Ovary (tissue), 10 donors: ENCODE measurements at regions of chr6 and their contacts with region 1.

Region 1: GRCh38 chr6:91268941-91269340 is 682.1 kb upstream of the MAP3K7 start:
- DNase-seq: no peak
- H3K4me3 ChIP-seq: no peak overlapping the region
- H3K27ac ChIP-seq: no peak overlapping the region
- H3K4me1 ChIP-seq: no peaks in the 10 kb centered on the region
- H3K27me3 ChIP-seq: no peaks in the 10 kb centered on the region
- CTCF ChIP-seq: no peak
- EP300 ChIP-seq: no peak
- POLR2A ChIP-seq: no peak

Region 2: GRCh38 chr6:91304521-91304920 is 35.6 kb after region 1 on chr6:
- intact Hi-C with region 1: loop called in 1 of 4 experiments (anchors 2 kb)
- DNase-seq: no peak
- H3K4me3 ChIP-seq: no peak overlapping the region
- H3K27ac ChIP-seq: no peak overlapping the region
- H3K4me1 ChIP-seq: peaks cover 3% of the 10 kb centered on the region
- H3K27me3 ChIP-seq: no peaks in the 10 kb centered on the region
- CTCF ChIP-seq: no peak
- EP300 ChIP-seq: no peak
- POLR2A ChIP-seq: no peak